Gastrocnemius medialis (tissue), 4 donors: ENCODE measurements at regions of chr9 and their contacts with region 1.

Region 1: DNA sequence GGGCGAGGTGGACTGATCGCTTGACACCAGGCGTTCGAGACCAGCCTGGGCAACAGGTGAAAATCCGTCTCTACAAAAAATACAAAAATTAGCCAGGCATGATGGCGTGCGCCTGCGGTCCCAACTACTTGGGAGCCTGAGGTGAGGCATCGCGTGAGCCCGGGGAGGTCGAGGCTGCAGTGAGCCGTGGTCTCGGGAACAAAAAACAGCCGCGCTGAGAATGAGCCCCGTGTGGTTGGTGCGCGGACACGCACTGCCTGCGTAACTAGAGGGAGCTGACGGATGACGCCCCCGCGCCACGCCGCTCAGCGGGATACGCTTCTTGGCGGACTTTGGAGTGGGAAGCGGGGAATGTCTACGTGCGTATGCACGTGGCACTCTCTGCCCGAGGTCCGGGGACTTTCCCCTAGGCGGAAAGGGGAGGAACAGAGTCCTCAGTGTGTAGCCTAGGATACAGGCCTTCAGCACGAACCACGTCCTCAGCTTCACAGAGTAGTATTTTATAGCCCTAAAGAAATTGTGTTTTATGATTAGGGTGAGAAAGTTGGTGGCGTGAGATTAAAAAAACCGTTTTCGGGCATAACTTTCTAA is at the start of gene RMRP:
- DNase-seq: peak; percentile 97 to 98
- ATAC-seq: peak; percentile 91 to 96
- H3K4me3 ChIP-seq: peak within 1 kb of the TSS; percentile 79 to 85 (median 82)
- H3K27ac ChIP-seq: peak within 1 kb of the TSS; percentile 92 to 97 (median 96)
- H3K4me1 ChIP-seq: peaks cover 28 to 29% of the 10 kb centered on the region in 2 donors
- H3K27me3 ChIP-seq: no peaks in the 10 kb centered on the region
- CTCF ChIP-seq: peak; percentile 44 to 56 (median 52)
- POLR2A ChIP-seq: peak; percentile 56 to 61
- total RNA-seq, gene RMRP: 115 to 715 (median 367) TPM

Region 2: GRCh38 chr9:35563791-35564197 is 93.8 kb before region 1 on chr9:
- in situ Hi-C with region 1: loop called in 1 of 4 experiments (anchors 25 kb)
- intact Hi-C with region 1: loop called (anchors 2 kb)
- DNase-seq: peak; percentile 55 to 81
- ATAC-seq: peak; percentile 31 to 34
- H3K4me3 ChIP-seq: peak overlapping the region; percentile 46 to 59 (median 51)
- H3K27ac ChIP-seq: peak overlapping the region; percentile 83 to 95 (median 90)
- H3K4me1 ChIP-seq: peaks cover 82 to 95% of the 10 kb centered on the region in 2 donors
- H3K27me3 ChIP-seq: no peaks in the 10 kb centered on the region
- CTCF ChIP-seq: no peak
- POLR2A ChIP-seq: peak; percentile 48 to 73

Region 3: GRCh38 chr9:35690431-35691333 is 33.0 kb after region 1 on chr9:
- in situ Hi-C with region 1: no loop called
- intact Hi-C with region 1: loop called (anchors 1 kb)
- DNase-seq: peak; percentile 56 to 75
- ATAC-seq: peak; percentile 21 to 32
- H3K4me3 ChIP-seq: peak overlapping the region; percentile 77 to 96 (median 87)
- H3K27ac ChIP-seq: peak overlapping the region; percentile 97 to 99 (median 98)
- H3K4me1 ChIP-seq: peaks cover 35 to 37% of the 10 kb centered on the region in 2 donors
- H3K27me3 ChIP-seq: no peaks in the 10 kb centered on the region
- CTCF ChIP-seq: no peak
- POLR2A ChIP-seq: peak; percentile 21 to 25

Region 4: DNA sequence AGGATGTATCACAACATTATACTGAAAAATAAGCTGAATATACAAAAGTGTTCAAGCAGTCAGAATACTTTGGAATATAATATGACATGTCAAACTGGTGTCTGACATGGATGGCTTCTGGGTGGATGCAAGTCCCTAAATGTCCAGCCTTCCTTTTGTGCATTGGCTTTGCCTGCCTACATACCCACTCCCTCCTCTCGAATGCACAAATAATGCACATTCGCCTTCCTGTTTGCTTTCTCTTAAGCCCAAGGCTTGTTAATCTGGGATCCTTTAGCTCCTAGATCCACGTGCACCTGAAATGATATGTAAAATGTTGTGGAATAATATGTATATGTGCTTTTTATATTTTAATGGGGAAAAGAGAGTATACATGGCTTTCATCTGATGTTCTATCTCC is 120.9 kb after region 1 on chr9:
- in situ Hi-C with region 1: no loop called
- intact Hi-C with region 1: no loop called
- DNase-seq: no peak
- ATAC-seq: no peak
- H3K4me3 ChIP-seq: no peak overlapping the region
- H3K27ac ChIP-seq: no peak overlapping the region
- H3K4me1 ChIP-seq: peaks cover 7 to 15% of the 10 kb centered on the region in 2 donors
- H3K27me3 ChIP-seq: no peaks in the 10 kb centered on the region
- CTCF ChIP-seq: no peak
- POLR2A ChIP-seq: no peak

Region 5: DNA sequence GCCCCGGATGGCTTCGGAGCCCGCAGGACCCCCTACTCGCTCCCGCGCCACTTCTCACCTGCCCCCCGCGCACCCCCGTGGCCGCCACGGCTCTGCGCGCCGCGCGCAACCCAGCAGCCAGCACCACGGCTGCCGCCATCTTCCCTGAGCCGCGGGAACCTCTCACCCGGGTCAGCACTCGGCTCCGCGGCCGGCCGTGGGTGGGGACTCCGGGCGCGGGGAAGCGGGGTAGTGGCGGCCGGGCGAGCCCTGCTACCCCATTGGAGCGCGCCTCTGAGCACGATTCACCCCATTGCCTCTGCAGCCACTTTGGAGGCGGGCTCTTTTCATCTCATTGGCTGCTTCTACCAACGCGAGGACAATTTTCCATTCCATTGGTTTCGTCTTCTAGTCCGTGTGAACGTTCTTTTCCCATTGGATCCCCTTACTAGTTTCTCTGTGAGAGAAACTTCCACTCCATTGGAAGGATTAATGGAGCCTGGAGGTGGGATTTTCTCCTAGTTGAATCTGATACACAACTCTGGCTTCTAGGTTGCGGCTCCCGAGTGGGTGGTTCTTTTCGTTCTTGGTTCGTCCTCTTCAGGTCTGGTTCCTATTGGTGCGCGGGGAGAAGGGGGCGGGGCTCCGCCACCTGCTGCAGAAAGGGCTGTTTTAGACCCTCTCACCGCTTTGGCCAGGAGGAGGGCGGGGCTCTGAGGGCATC is 157.4 kb after region 1 on chr9 and contains the start of gene HINT2:
- in situ Hi-C with region 1: no loop called
- intact Hi-C with region 1: loop called (anchors 5 kb)
- DNase-seq: peak; percentile 95 to 98
- ATAC-seq: peak; percentile 87 to 95
- H3K4me3 ChIP-seq: peak within 1 kb of the TSS; percentile 78 to 93 (median 84)
- H3K27ac ChIP-seq: peak within 1 kb of the TSS; percentile 95 to 98 (median 96)
- H3K4me1 ChIP-seq: peaks cover 30 to 34% of the 10 kb centered on the region in 2 donors
- H3K27me3 ChIP-seq: no peaks in the 10 kb centered on the region
- CTCF ChIP-seq: peak in 1 of 5 experiments; percentile 3
- POLR2A ChIP-seq: peak; percentile 92 to 94
- total RNA-seq, gene HINT2: 4.5 to 26.7 (median 22.0) TPM